ENCODE measurements at regions of chr1 and their contacts with region 1.

Region 1: DNA sequence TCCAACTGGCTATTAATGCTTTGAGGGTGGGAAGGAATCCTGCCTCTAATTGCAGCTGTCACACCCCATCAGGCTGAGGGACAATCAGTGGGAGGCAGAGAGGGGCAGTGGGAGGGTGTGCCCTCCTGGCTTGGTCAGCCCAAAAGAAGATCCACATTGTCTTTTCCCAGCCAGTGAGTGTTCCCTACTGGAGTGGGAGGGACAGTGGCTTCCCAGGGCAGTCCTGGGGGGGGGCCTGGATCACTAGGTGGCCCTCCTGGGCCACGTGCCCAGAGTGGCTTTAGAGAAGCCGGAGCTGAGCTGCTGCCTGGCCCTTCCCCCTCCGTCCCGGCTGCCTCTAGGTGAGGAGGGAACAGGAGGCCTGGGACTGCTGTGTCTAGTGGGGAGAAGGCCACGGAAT is 14.0 kb downstream of the INKA2 start:
- DNase-seq: peak in 1 of 2 experiments; percentile 53
- H3K4me3 ChIP-seq: no peak overlapping the region
- H3K27ac ChIP-seq: no peak overlapping the region
- H3K4me1 ChIP-seq: peaks cover 2 to 26% (median 14%) of the 10 kb centered on the region in 4 experiments
- H3K27me3 ChIP-seq: no peaks in the 10 kb centered on the region; a peak in 1 of 7 replicates
- CTCF ChIP-seq: no peak
- EP300 ChIP-seq: no peak
- POLR2A ChIP-seq: no peak
- RAD21 ChIP-seq: no peak

Region 2: GRCh38 chr1:111707906-111708305 is 17.3 kb before region 1 on chr1:
- CTCF ChIA-PET with region 1: interaction called, 1,070 read pairs
- POLR2A ChIA-PET with region 1: interaction called, 343 read pairs
- DNase-seq: no peak
- H3K4me3 ChIP-seq: no peak overlapping the region
- H3K27ac ChIP-seq: no peak overlapping the region
- H3K4me1 ChIP-seq: no peaks in the 10 kb centered on the region
- H3K27me3 ChIP-seq: no peaks in the 10 kb centered on the region
- CTCF ChIP-seq: no peak
- EP300 ChIP-seq: no peak
- POLR2A ChIP-seq: no peak
- RAD21 ChIP-seq: no peak

Measured in H1 (cell line).